ENCODE measurements at regions of chr14 and their contacts with region 1.

Region 1: GRCh38 chr14:56579345-56580220 is at the start of gene TMEM260:
- DNase-seq: peak; percentile 83 to 95 (median 92)
- ATAC-seq: peak; percentile 98
- H3K4me3 ChIP-seq: peak within 1 kb of the TSS; percentile 83
- H3K4me3 Mint-ChIP-seq: peak within 1 kb of the TSS; percentile 87 to 97 (median 95)
- H3K27ac ChIP-seq: peak within 1 kb of the TSS; percentile 88
- H3K27ac Mint-ChIP-seq: peak within 1 kb of the TSS; percentile 90 to 98 (median 96)
- H3K4me1 ChIP-seq: peaks cover 19 to 22% of the 10 kb centered on the region in 2 donors
- H3K4me1 Mint-ChIP-seq: peaks cover 33 to 45% (median 42%) of the 10 kb centered on the region in 7 donors
- H3K27me3 ChIP-seq: no peaks in the 10 kb centered on the region
- H3K27me3 Mint-ChIP-seq: no peaks in the 10 kb centered on the region
- total RNA-seq, gene TMEM260: 20.8 to 39.0 (median 27.4) TPM

Region 2: DNA sequence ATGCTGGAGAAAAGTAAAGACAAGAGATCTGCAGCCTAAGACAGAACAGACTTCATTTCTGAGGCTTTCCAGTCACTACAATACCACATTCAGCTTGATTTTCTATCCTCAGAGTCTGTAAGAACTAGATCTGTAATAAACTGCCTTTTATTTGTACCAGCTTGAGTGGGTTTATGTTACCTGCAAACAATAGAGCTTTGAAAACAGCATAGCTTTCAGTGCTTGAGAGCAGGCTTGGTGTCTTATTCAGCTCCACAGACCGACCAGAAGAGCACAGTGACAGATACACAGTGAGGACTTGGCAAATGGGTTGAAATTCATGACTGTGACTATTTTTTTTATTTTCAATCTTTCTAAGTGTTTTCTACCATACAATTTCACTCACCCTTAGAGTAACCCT is 438.5 kb after region 1 on chr14:
- CTCF ChIA-PET with region 1: no interaction called
- POLR2A ChIA-PET with region 1: no interaction called
- intact Hi-C with region 1: no loop called
- DNase-seq: no peak
- ATAC-seq: no peak
- H3K4me3 ChIP-seq: no peak overlapping the region
- H3K4me3 Mint-ChIP-seq: no peak overlapping the region
- H3K27ac ChIP-seq: no peak overlapping the region
- H3K27ac Mint-ChIP-seq: no peak overlapping the region
- H3K4me1 ChIP-seq: no peaks in the 10 kb centered on the region
- H3K4me1 Mint-ChIP-seq: no peaks in the 10 kb centered on the region
- H3K27me3 ChIP-seq: no peaks in the 10 kb centered on the region
- H3K27me3 Mint-ChIP-seq: peaks cover 0 to 22% (median 0%) of the 10 kb centered on the region in 5 donors

Region 3: GRCh38 chr14:57390028-57390805 is 810.6 kb after region 1 on chr14 and contains the start of gene NAA30:
- CTCF ChIA-PET with region 1: interaction called, 3 read pairs
- POLR2A ChIA-PET with region 1: interaction called, 4 read pairs
- intact Hi-C with region 1: loop called (anchors 1 to 2 kb)
- DNase-seq: peak; percentile 80 to 97 (median 92)
- ATAC-seq: peak; percentile 98
- H3K4me3 ChIP-seq: peak within 1 kb of the TSS; percentile 68
- H3K4me3 Mint-ChIP-seq: peak within 1 kb of the TSS; percentile 86 to 98 (median 94)
- H3K27ac ChIP-seq: peak within 1 kb of the TSS; percentile 72
- H3K27ac Mint-ChIP-seq: peak within 1 kb of the TSS; percentile 88 to 99 (median 95)
- H3K4me1 ChIP-seq: peaks cover 11 to 13% of the 10 kb centered on the region in 2 donors
- H3K4me1 Mint-ChIP-seq: peaks cover 31 to 58% (median 40%) of the 10 kb centered on the region in 7 donors
- H3K27me3 ChIP-seq: no peaks in the 10 kb centered on the region
- H3K27me3 Mint-ChIP-seq: peaks cover 0 to under 1% (median 0%) of the 10 kb centered on the region in 5 donors
- total RNA-seq, gene NAA30: 14.6 to 19.6 (median 16.2) TPM

Measured in naive thymus-derived CD4-positive, alpha-beta T cell (primary cell).